Heart right ventricle (tissue), 16 donors: ENCODE measurements at regions of chr7 and their contacts with region 1.

Region 1: GRCh38 chr7:88062238-88062637 is 128.2 kb downstream of the ADAM22 start:
- DNase-seq: no peak
- ATAC-seq: no peak
- H3K4me3 ChIP-seq: no peak overlapping the region
- H3K27ac ChIP-seq: no peak overlapping the region
- H3K4me1 ChIP-seq: peaks cover 0 to under 1% (median 0%) of the 10 kb centered on the region in 9 donors
- H3K27me3 ChIP-seq: no peaks in the 10 kb centered on the region
- CTCF ChIP-seq: no peak

Region 2: GRCh38 chr7:87944531-87944930 is 117.7 kb before region 1 on chr7:
- intact Hi-C with region 1: no loop called
- DNase-seq: no peak
- ATAC-seq: no peak
- H3K4me3 ChIP-seq: no peak overlapping the region
- H3K27ac ChIP-seq: no peak overlapping the region
- H3K4me1 ChIP-seq: no peaks in the 10 kb centered on the region
- H3K27me3 ChIP-seq: no peaks in the 10 kb centered on the region
- CTCF ChIP-seq: no peak

Region 3: GRCh38 chr7:88001744-88002530 is 60.3 kb before region 1 on chr7:
- intact Hi-C with region 1: loop called in 1 of 10 experiments (anchors 10 kb)
- DNase-seq: no peak
- ATAC-seq: peak in 2 of 8 donors; percentile 42 to 65
- H3K4me3 ChIP-seq: no peak overlapping the region
- H3K27ac ChIP-seq: peak overlapping the region in 2 of 10 donors; percentile 0 to 1
- H3K4me1 ChIP-seq: peaks cover 0 to 5% (median 0%) of the 10 kb centered on the region in 9 donors
- H3K27me3 ChIP-seq: no peaks in the 10 kb centered on the region
- CTCF ChIP-seq: no peak

Region 4: DNA sequence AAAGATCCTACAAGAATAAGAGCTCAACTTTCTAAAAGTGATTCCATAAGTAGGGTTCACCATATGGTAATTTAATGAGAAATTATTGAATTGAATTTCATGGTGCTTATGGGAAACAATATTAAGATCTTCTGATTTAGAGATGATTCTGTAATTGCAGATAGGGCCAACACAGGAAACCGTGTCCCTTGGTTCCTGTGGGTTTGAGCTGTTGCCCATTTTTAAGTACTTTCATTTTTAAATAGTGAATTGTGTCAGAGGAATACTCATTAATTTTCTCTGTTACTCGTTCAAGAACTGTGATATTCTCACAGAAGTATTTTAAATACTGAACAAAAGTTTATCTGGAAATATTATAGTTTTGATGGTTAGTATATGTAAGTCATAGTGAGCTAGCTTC is 28.4 kb after region 1 on chr7:
- intact Hi-C with region 1: no loop called
- DNase-seq: no peak
- ATAC-seq: peak in 3 of 8 donors; percentile 65 to 72 (median 66)
- H3K4me3 ChIP-seq: peak overlapping the region in 3 of 10 donors; percentile 1 to 5 (median 4)
- H3K27ac ChIP-seq: peak overlapping the region in 6 of 10 donors; percentile 17 to 59 (median 36)
- H3K4me1 ChIP-seq: peaks cover 0 to 26% (median 11%) of the 10 kb centered on the region in 9 donors
- H3K27me3 ChIP-seq: no peaks in the 10 kb centered on the region
- CTCF ChIP-seq: no peak

Region 5: DNA sequence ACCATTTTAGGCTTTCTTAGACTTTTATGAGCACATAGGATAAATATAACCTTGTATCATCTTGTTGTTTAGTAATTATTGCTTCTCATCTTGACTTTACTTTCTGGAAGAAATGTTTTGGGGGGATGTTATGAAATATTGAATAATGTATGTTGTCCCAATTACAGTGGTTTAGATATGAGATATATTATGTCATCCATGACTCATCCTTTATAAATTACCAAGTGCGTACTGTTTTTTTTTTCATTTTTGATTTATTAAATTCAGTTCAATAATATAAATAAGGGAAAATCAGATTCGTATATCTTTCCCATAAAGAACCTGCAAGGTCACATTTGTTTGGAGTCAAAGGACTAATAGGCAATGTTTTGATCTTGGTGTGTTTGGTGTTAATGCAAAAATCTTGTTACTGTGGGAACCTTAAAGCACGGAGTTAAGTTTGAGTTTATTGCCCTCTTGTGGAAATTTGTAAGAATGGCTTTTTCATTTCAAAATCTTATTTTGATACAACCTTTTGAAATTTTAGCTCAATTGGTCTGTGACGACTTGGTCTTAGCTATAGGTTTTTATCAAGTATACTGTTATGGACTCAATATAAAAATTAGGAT is 49.0 kb after region 1 on chr7:
- intact Hi-C with region 1: no loop called
- DNase-seq: no peak
- ATAC-seq: peak in 5 of 8 donors; percentile 28 to 59 (median 54)
- H3K4me3 ChIP-seq: no peak overlapping the region
- H3K27ac ChIP-seq: no peak overlapping the region
- H3K4me1 ChIP-seq: peaks cover 0 to 26% (median 4%) of the 10 kb centered on the region in 9 donors
- H3K27me3 ChIP-seq: no peaks in the 10 kb centered on the region
- CTCF ChIP-seq: peak in 8 of 9 donors; percentile 48 to 76 (median 68)